Ascending aorta (tissue), 2 donors: ENCODE measurements at regions of chr16 and their contacts with region 1.

Region 1: DNA sequence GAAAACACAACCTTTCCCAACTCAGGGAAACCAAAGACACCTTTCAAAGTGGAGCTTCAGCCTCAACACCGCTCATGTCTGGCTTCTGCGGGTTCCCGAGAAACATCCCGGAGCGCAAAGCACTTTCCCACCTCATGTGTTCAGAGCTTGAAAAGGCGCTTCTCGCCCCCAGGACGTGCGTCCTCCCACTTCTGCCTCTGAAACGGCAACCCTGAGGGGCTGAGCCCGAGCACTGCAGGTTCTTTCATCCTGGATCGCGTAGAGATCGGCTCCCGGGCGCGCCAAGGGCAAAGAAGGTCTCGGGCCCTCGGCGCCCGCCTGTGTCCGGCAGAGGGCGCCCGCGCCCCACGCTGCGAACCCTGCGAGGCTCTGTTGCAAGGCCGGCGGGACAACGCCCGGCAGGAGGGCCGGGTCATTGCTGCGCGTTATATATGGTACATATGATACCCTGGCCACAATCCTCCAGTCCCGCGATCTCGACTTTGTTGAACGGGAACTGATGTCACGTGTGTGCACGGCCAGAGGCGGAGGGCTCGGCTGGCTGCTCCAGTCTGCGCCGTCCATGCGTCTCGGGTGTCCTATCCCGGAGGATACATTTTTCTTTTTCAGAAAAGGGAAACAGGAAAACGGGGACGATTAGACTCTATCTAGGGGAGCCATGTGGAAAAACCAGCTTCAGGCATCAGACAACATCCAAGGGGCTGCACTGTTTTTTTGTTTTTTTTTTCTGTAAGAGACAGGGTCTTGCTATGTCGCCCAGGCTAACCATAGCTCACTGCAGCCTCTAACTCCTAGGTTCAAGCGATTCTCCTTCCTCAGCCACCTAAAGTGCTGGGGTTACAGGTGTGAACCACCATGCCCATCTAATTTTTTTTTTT is 19.1 kb downstream of the COQ7 start:
- DNase-seq: peak; percentile 44 to 91
- H3K4me3 ChIP-seq: peak overlapping the region; percentile 40 to 61
- H3K27ac ChIP-seq: no peak overlapping the region
- H3K4me1 ChIP-seq: peaks cover 0 to 2% of the 10 kb centered on the region in 2 donors
- H3K27me3 ChIP-seq: no peaks in the 10 kb centered on the region
- CTCF ChIP-seq: peak; percentile 97 to 100 (median 99)

Region 2: GRCh38 chr16:19113453-19114351 is 27.1 kb after region 1 on chr16 and contains the start of gene ITPRIPL2:
- intact Hi-C with region 1: loop called (anchors 1 kb)
- DNase-seq: peak; percentile 54 to 94
- H3K4me3 ChIP-seq: peak within 1 kb of the TSS; percentile 75 to 92
- H3K27ac ChIP-seq: peak within 1 kb of the TSS; percentile 98 to 99
- H3K4me1 ChIP-seq: peaks cover 12 to 38% of the 10 kb centered on the region in 2 donors
- H3K27me3 ChIP-seq: no peaks in the 10 kb centered on the region
- CTCF ChIP-seq: peak in 1 of 3 experiments; percentile 16
- total RNA-seq, gene ITPRIPL2: 94.5 TPM

Region 3: DNA sequence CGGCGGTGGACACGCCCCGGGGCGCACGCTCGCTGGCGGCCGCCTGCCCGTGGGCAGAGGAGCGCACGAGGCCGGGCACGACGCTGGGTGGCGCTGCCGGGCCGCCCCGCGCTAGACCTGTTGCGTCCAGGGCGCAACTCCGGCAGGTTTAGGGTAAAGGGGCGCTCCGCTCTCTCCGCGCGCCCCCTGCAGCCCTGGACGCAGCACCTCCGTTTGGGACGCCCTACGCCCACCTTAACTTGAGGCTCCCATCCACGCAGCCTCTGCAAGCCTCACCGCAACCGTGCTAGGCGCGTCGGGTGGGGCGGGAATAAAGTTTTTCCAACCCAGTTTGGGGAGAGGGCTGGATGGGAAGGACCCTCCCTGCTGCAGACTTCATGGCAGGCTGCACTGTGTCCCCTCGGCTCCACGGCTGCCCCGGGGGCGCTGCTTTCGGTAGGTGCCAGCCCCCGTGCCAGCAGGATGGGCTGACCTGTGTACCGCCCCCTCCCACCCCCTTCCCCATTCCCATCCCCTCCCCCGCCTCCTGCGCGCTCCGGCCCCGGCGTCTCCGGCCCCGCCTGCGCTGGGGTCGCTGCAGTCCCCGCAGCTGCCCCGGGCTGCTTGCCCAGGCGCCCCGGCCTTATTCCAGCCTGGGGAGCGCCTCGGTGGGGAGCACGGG is 81.3 kb after region 1 on chr16 and contains the start of gene SYT17:
- intact Hi-C with region 1: loop called (anchors 2 kb)
- DNase-seq: peak in 1 of 2 donors; percentile 75
- H3K4me3 ChIP-seq: peak within 1 kb of the TSS; percentile 52 to 72
- H3K27ac ChIP-seq: peak within 1 kb of the TSS in 1 of 2 donors; percentile 10
- H3K4me1 ChIP-seq: peaks cover 3 to 4% of the 10 kb centered on the region in 2 donors
- H3K27me3 ChIP-seq: no peaks in the 10 kb centered on the region
- CTCF ChIP-seq: peak; percentile 42 to 82 (median 55)
- total RNA-seq, gene SYT17: 2.4 TPM

Region 4: DNA sequence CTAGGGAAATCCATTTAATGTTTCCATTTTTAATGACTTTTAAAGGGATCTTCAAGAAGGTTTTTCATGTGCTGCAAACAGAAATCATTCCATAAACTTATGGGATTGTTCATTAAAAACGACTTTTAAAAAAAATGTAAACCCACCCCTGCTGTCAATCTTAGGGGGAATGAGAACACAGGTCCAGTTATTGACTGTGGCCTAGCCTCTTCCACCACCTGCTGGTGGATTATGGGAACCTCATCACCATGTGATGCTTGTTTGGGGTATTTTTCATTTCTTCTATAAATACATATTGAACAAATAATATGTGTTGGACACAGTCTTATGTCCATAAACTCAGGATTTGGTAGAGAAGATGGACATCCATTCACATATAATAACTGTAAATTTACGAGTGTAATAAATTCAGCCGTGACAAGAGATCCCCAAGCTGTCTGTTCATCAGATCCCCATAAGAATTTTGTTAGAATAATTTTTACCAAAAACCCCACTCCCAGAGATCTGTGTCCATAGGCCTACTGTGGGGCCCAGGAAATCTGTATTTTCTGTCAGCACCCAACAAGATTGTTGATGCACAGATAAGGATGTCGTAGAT is 289.1 kb after region 1 on chr16:
- intact Hi-C with region 1: loop called (anchors 1 kb)
- DNase-seq: no peak
- H3K4me3 ChIP-seq: no peak overlapping the region
- H3K27ac ChIP-seq: no peak overlapping the region
- H3K4me1 ChIP-seq: no peaks in the 10 kb centered on the region
- H3K27me3 ChIP-seq: no peaks in the 10 kb centered on the region
- CTCF ChIP-seq: peak; percentile 66 to 85 (median 70)

Region 5: GRCh38 chr16:19502395-19503131 is 416.0 kb after region 1 on chr16:
- intact Hi-C with region 1: loop called (anchors 1 kb)
- DNase-seq: peak in 1 of 2 donors; percentile 65
- H3K4me3 ChIP-seq: no peak overlapping the region
- H3K27ac ChIP-seq: no peak overlapping the region
- H3K4me1 ChIP-seq: no peaks in the 10 kb centered on the region
- H3K27me3 ChIP-seq: no peaks in the 10 kb centered on the region
- CTCF ChIP-seq: peak; percentile 40 to 72 (median 59)

Region 6: DNA sequence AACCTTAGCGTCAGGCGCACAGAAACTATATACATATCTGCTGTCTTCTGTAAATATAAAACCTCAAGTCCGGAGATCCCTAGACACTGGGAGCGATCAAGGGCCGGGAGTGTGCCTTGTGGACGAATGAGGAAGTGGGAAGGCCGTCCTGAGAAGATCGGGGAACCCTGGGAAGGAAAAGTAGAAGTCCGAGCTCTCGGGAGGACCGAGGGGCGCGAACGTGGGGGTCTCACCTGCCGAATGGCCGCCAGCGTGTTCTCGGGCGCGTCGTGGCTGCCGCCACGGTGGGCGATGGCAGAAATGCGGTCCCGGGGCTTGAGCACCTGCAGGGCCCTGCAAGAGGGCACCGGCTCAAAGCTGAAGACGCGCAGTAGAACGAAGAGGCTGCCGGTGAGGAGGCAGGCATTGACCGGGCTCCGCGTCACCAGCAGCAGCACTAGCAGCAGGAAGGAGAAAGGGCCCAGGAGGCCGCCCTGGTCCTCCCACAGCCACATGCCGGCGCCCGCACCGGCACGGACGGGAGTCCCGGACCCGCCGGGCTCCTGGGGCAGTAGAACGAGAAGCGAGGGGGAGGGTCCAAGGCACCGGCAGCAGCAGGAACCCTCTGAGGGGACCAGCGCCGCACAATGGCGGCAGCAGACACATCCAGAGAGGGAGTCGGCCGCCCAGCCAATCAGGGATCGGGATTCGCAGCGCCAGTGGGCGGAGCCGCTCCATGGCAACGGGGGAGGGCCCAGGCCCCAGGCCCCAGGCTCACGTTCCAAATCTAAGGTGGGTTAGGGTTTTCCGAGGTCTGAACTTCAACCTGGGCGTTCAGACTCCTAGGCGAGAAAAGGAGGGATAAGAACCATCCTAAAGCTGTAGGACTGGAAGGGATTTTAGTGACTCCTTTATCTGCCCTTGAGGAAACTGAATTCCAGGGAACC is 435.2 kb after region 1 on chr16 and contains the start of gene GDE1:
- intact Hi-C with region 1: loop called (anchors 5 kb)
- DNase-seq: peak; percentile 82 to 97
- H3K4me3 ChIP-seq: peak within 1 kb of the TSS; percentile 82 to 89
- H3K27ac ChIP-seq: peak within 1 kb of the TSS; percentile 85 to 91
- H3K4me1 ChIP-seq: peaks cover 6 to 31% of the 10 kb centered on the region in 2 donors
- H3K27me3 ChIP-seq: no peaks in the 10 kb centered on the region
- CTCF ChIP-seq: peak; percentile 17 to 55 (median 50)
- total RNA-seq, gene GDE1: 27.4 TPM

Region 7: GRCh38 chr16:19745286-19746010 is 658.9 kb after region 1 on chr16:
- intact Hi-C with region 1: no loop called
- DNase-seq: peak in 1 of 2 donors; percentile 44
- H3K4me3 ChIP-seq: no peak overlapping the region
- H3K27ac ChIP-seq: no peak overlapping the region
- H3K4me1 ChIP-seq: no peaks in the 10 kb centered on the region
- H3K27me3 ChIP-seq: no peaks in the 10 kb centered on the region
- CTCF ChIP-seq: no peak